ENCODE measurements at regions of chr7 and their contacts with region 1.

Region 1: GRCh38 chr7:81499262-81500116 is 270.4 kb downstream of the HGF start:
- DNase-seq: peak; percentile 84
- ATAC-seq: peak; percentile 74
- H3K4me3 ChIP-seq: peak overlapping the region; percentile 38; the same call in 1 of the 2 replicates
- H3K27ac ChIP-seq: peak overlapping the region; percentile 11
- H3K4me1 ChIP-seq: peaks cover 18% of the 10 kb centered on the region
- H3K27me3 ChIP-seq: no peaks in the 10 kb centered on the region
- CTCF ChIP-seq: peak; percentile 81

Region 2: GRCh38 chr7:81638216-81638615 is 138.7 kb after region 1 on chr7:
- CTCF ChIA-PET with region 1: no interaction called
- POLR2A ChIA-PET with region 1: no interaction called
- intact Hi-C with region 1: loop called (anchors 2 kb)
- DNase-seq: peak; percentile 95
- ATAC-seq: peak; percentile 95
- H3K4me3 ChIP-seq: no peak overlapping the region
- H3K27ac ChIP-seq: peak overlapping the region; percentile 99
- H3K4me1 ChIP-seq: peaks cover 38% of the 10 kb centered on the region
- H3K27me3 ChIP-seq: no peaks in the 10 kb centered on the region
- CTCF ChIP-seq: no peak

Region 3: DNA sequence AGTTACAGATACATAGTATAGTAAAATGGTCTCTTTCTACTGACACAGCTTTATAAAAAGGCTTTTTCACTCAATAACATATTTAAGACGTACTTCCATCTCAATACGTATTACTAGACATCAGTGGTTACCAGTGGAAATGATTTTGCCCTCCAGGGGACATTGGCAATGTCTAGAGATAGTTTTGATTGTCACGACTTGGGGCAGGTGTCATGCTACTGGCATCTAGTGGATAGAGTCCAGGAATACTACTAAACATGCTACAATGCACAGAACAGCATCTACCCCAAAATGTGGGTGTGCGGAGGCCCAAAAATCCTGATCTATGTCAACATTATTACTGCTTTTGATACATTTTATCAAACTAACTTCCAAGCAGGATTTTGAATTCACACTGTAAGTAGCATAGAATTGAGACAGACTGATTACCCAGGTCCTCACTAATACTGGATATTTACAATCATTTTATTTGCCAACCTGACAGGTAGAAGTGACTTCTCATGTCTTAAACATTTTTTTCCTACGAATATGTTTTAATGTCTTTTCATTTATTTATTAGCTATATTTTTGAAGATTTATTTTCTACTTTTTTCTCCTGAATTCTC is 216.6 kb after region 1 on chr7:
- CTCF ChIA-PET with region 1: interaction called, 39 read pairs
- POLR2A ChIA-PET with region 1: no interaction called
- intact Hi-C with region 1: loop called (anchors 1 kb)
- DNase-seq: peak; percentile 83
- ATAC-seq: peak; percentile 99
- H3K4me3 ChIP-seq: peak overlapping the region; percentile 39
- H3K27ac ChIP-seq: peak overlapping the region; percentile 68
- H3K4me1 ChIP-seq: peaks cover 13% of the 10 kb centered on the region; the same call in 1 of the 2 replicates
- H3K27me3 ChIP-seq: no peaks in the 10 kb centered on the region
- CTCF ChIP-seq: peak; percentile 90

Region 4: DNA sequence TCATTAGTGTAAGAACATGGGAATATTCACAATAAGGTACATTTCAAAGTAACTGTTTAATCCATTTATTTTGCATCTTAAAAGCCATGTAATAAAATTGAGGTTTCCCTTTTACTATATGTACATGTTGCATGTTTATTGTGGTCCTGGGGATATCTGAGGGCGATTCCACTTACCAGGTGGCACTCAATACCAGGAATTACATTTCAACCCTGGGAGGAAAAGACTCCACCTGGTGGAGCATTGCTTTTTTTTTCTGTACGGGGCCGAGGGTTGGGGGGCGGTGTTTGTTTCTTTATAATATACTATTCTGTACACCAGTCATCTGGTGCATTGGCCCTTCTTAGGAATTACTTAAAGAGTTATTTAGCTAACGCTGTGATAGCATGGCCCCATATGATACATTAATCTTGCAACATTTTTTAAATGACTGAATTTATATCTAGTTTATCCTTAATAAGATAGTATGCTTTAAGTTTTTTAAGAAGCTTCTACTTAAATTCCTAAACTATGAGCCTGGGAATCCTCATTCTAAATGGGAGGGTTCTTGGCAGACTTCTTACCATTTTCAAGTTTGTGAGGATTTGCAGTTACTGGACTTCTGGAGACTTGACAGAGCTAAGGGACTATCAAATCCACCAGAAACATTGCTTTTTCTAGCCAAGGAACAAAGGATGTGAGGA is 277.6 kb after region 1 on chr7:
- CTCF ChIA-PET with region 1: no interaction called
- POLR2A ChIA-PET with region 1: no interaction called
- intact Hi-C with region 1: loop called (anchors 1 kb)
- DNase-seq: peak; percentile 22
- ATAC-seq: peak; percentile 42; the same call in 1 of the 2 replicates
- H3K4me3 ChIP-seq: no peak overlapping the region
- H3K27ac ChIP-seq: no peak overlapping the region
- H3K4me1 ChIP-seq: no peaks in the 10 kb centered on the region
- H3K27me3 ChIP-seq: no peaks in the 10 kb centered on the region
- CTCF ChIP-seq: peak; percentile 61

Region 5: DNA sequence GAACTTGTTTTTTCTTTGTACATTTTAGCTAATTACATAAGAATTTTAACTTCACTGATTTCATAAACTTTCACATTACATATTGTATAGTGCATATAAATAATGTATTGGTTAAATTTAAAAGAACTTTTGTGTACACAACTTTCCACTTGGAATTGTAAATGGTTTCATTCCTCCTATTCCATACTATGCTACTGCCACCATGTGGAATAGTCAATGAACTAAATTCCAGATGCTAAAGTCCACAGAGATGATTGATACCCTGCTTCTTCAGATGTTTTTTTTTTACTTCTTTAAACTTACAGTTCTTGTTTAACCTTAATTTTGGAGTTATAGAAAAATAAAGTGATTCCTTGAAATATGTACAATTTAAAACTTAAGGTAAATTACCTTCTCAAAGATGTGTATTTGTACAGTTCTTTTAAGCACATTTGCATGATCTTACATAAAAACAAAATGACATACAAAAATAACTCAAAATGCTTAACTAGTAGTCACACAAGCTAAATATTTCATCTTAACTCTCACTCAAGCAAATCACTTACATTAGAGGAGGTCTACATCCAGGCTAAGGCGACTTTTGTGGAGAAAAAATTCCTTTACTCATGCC is 518.0 kb after region 1 on chr7:
- CTCF ChIA-PET with region 1: interaction called, 3 read pairs
- POLR2A ChIA-PET with region 1: no interaction called
- intact Hi-C with region 1: loop called (anchors 1 kb)
- DNase-seq: peak; percentile 57
- ATAC-seq: peak; percentile 65
- H3K4me3 ChIP-seq: no peak overlapping the region
- H3K27ac ChIP-seq: no peak overlapping the region
- H3K4me1 ChIP-seq: peaks cover 13% of the 10 kb centered on the region
- H3K27me3 ChIP-seq: no peaks in the 10 kb centered on the region
- CTCF ChIP-seq: peak; percentile 73

Region 6: DNA sequence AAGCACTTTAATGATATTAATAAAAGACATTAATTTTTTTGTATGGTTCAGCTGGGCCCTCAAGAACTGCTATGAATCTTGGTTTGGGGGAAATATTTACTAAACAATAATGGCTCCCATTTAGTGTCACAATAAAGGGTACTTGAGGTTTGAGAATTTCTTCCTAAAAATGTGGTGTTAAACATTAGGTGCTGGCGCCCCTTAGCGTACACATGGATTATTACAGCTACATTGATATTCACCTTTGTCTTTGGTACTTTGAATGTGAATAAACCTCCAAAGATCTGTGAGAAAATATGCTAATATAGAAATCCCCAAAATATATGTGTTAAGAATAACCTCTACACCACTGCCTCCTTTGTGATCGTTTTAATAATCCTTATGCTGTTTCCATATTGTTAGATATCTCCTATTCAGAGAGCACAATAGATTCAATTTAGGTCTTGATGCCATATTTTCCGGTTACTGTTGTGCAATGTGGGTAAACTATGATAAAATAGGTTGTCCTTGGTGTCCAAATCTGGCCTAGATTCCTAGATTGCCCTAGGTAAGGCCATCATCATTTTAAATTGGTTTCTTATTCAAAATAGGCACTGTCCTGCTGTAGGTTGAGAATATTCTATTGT is 1105.9 kb after region 1 on chr7:
- CTCF ChIA-PET with region 1: no interaction called
- POLR2A ChIA-PET with region 1: no interaction called
- intact Hi-C with region 1: loop called (anchors 10 kb)
- DNase-seq: peak; percentile 59
- ATAC-seq: no peak
- H3K4me3 ChIP-seq: no peak overlapping the region
- H3K27ac ChIP-seq: no peak overlapping the region
- H3K4me1 ChIP-seq: no peaks in the 10 kb centered on the region
- H3K27me3 ChIP-seq: no peaks in the 10 kb centered on the region; the same call in 1 of the 2 replicates
- CTCF ChIP-seq: peak; percentile 82